ENCODE measurements at regions of chr6 and their contacts with region 1.

Region 1: GRCh38 chr6:109964949-109965348 is 13.2 kb upstream of the GPR6 start:
- DNase-seq: no peak
- H3K4me3 ChIP-seq: no peak overlapping the region
- H3K27ac ChIP-seq: no peak overlapping the region
- H3K4me1 ChIP-seq: no peaks in the 10 kb centered on the region
- H3K27me3 ChIP-seq: no peaks in the 10 kb centered on the region
- CTCF ChIP-seq: no peak
- POLR2A ChIP-seq: no peak

Region 2: DNA sequence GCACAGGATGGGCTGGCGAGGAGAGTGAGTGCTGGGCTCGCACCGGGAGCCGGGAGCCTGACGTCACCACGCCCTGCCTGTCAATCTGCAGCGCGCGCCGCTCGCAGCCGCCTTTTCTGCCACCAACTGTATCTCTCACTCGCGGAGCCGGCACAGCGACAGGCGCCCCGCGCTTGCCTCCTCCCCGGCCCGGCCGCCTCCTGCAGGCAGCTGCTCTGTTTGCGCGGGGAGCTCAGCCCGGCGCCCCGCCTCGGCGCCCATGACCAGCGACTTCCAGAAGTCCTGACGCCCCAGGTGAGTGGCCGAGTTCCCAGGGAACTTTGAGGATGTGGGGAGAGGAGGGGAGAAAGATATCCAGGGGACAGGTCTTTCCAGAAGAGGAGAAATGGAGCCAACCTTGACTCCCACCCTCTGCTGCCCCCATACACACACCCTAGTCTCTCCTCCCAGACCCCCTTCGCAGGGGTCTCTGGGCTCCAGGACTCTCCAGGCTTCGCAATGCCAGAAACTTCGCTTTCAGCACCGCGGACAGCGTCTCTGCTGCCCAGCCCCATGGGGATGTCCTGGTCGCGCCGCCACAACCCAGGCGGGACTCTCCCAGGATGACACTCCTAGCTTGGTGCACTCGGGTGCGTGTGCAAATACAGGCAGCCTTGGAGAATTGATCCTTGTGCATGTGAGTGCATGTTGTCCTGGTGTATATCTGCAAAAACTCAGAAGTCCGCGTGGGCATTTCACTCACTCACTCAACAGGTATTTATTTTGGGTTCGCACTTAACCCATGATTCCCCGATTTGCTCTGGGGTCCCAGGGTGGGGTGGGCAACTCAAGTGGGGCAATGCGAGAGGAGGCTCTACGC is 13.5 kb after region 1 on chr6 and contains the start of gene GPR6:
- intact Hi-C with region 1: loop called (anchors 1 kb)
- DNase-seq: peak in 1 of 2 donors; percentile 76
- H3K4me3 ChIP-seq: peak within 1 kb of the TSS in 1 of 3 donors; percentile 25
- H3K27ac ChIP-seq: no peak within 1 kb of the TSS
- H3K4me1 ChIP-seq: no peaks in the 10 kb centered on the region
- H3K27me3 ChIP-seq: peaks cover 7 to 50% of the 10 kb centered on the region in 2 donors
- CTCF ChIP-seq: no peak
- POLR2A ChIP-seq: no peak
- total RNA-seq, gene GPR6: 0.15 TPM in 1 of 3 donors, not detected in the others

Measured in breast epithelium (tissue), 4 donors.